GM12878 (cell line): ENCODE measurements at regions of chr19 and their contacts with region 1.

Region 1: GRCh38 chr19:17718947-17719711 is at the start of gene MAP1S:
- DNase-seq: no peak
- ATAC-seq: peak; percentile 90
- H3K4me3 ChIP-seq: peak within 1 kb of the TSS; percentile 99
- H3K27ac ChIP-seq: peak within 1 kb of the TSS; percentile 38; the same call in 1 of the 2 replicates
- H3K4me1 ChIP-seq: peaks cover 27% of the 10 kb centered on the region
- H3K27me3 ChIP-seq: no peaks in the 10 kb centered on the region
- CTCF ChIP-seq: no peak
- EP300 ChIP-seq: no peak
- POLR2A ChIP-seq: peak; percentile 91
- RAD21 ChIP-seq: no peak
- polyA plus RNA-seq, gene MAP1S: 2.1 to 3.4 TPM

Region 2: GRCh38 chr19:17739121-17739875 is 20.2 kb after region 1 on chr19:
- CTCF ChIA-PET with region 1: interaction called, 3 read pairs
- POLR2A ChIA-PET with region 1: interaction called, 12 read pairs
- RAD21 ChIA-PET with region 1: interaction called, 3 read pairs
- SMC1A ChIA-PET with region 1: interaction called, 13 read pairs
- in situ Hi-C with region 1: no loop called
- intact Hi-C with region 1: no loop called
- DNase-seq: peak; percentile 40
- ATAC-seq: peak; percentile 83
- H3K4me3 ChIP-seq: no peak overlapping the region
- H3K27ac ChIP-seq: peak overlapping the region; percentile 45; the same call in 1 of the 2 replicates
- H3K4me1 ChIP-seq: peaks cover 16% of the 10 kb centered on the region
- H3K27me3 ChIP-seq: no peaks in the 10 kb centered on the region
- CTCF ChIP-seq: no peak
- EP300 ChIP-seq: peak in 1 of 2 experiments; percentile 74; a peak in 1 of 4 replicates
- POLR2A ChIP-seq: no peak
- RAD21 ChIP-seq: no peak

Region 3: DNA sequence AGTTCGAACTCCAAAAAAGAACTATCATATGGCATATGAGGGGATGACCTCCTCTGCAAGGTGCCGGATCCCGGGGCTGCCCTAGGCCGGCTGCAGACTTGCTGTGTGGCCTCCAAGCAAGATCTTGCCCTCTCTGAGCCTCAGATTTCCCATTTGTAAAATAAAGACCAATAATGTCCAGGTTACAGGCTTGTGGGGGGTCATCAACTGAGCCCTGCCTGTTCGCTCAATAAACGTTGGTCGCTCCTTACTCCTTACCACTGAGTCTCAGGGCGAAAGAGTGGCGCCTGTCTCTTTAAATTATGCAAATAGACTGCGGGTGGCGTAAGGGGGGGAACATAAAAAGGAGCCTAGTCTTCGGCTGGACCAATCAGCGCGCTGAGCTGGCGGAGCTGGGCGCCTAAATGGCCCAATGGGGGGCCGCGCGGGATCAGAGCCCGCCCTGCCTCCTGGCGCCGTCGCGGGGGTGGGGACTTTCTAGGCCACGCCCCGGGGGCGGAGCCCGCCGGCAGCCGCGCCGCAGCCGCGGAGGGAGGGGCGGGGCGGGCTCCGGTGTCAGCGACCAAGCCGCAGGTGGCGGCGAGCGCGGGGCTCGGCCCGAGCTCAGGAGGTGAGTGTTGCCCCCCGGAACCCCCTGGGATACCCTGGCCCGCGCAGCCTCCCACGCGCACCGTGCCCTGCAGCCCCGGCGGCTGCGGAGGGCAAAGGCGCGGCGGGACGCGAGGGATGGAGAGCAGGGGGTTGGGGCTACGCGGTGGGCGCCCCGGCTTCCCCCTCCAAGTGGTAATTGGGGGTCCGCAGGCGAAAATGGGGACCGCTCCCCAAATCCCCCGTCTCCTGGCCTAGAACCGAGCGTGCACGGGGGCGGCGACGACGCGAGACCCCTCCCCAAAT is 28.3 kb after region 1 on chr19:
- CTCF ChIA-PET with region 1: interaction called, 5 read pairs
- POLR2A ChIA-PET with region 1: interaction called, 10 read pairs
- RAD21 ChIA-PET with region 1: interaction called, 11 read pairs
- SMC1A ChIA-PET with region 1: interaction called, 91 read pairs
- in situ Hi-C with region 1: no loop called
- intact Hi-C with region 1: loop called (anchors 5 kb)
- DNase-seq: peak; percentile 68
- ATAC-seq: peak; percentile 87
- H3K4me3 ChIP-seq: peak overlapping the region; percentile 77
- H3K27ac ChIP-seq: peak overlapping the region; percentile 55
- H3K4me1 ChIP-seq: peaks cover 23% of the 10 kb centered on the region
- H3K27me3 ChIP-seq: no peaks in the 10 kb centered on the region
- CTCF ChIP-seq: no peak
- EP300 ChIP-seq: no peak
- POLR2A ChIP-seq: peak; percentile 57; the same call in 1 of the 2 replicates
- RAD21 ChIP-seq: no peak